ENCODE measurements at regions of chr21 and their contacts with region 1.

Region 1: GRCh38 chr21:35051287-35051818 is 2.3 kb upstream of the RUNX1 start:
- DNase-seq: peak; percentile 94
- H3K4me3 Mint-ChIP-seq: peak overlapping the region; percentile 89
- H3K27ac Mint-ChIP-seq: peak overlapping the region; percentile 94
- H3K4me1 Mint-ChIP-seq: peaks cover 57% of the 10 kb centered on the region
- H3K27me3 Mint-ChIP-seq: peaks cover 4% of the 10 kb centered on the region

Region 2: GRCh38 chr21:34807146-34807880 is 244.0 kb before region 1 on chr21:
- intact Hi-C with region 1: loop called (anchors 2 kb)
- DNase-seq: peak; percentile 84
- H3K4me3 Mint-ChIP-seq: peak overlapping the region; percentile 57
- H3K27ac Mint-ChIP-seq: peak overlapping the region; percentile 94
- H3K4me1 Mint-ChIP-seq: peaks cover 66% of the 10 kb centered on the region
- H3K27me3 Mint-ChIP-seq: no peaks in the 10 kb centered on the region

Region 3: DNA sequence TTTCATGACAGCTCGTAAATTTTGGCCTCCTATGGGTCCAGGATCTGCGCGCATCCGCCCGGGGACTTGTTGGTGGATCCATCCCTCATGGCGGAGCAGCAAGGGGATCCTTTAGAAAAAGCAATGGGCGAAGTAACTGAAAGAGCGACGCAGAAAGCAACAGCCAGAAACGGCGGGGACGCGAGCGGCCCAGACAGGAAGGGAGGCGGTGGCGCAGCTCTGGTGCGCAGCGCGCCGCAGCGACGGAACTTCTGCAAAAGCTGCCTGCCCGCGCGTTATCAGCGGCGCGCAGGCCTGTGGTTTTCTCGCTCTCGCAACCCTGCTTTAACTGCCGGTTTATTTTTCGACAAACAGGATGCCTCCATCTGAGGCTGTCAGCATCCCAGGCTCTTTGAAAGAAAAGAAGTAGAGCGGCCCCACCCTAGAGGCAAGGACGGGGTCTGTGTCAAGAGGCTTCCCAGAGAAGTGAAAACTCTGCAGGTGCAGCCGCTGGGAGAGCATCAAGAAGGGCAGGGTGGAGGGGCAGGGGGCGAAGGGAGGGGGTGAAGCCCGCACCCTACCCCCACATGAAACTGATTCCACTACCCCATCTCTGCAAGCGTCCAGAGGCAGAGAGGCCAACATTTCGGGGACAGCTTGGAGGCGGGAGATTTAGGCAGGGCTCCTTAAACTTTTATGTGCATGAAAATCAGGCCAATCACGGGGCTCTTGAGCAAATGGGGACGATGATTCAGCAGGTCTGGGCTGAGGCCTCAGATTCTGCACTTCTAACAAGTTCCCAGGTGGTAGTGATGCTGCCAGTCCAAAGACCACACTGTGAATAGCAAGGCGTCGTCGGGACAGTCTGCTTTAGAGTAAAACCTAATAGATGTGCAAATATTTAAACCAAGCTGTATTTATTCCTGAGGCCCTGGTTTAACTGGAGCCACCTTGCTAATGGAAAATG is 24.5 kb before region 1 on chr21:
- intact Hi-C with region 1: loop called (anchors 1 kb)
- DNase-seq: peak; percentile 96
- H3K4me3 Mint-ChIP-seq: peak overlapping the region; percentile 81
- H3K27ac Mint-ChIP-seq: peak overlapping the region; percentile 99
- H3K4me1 Mint-ChIP-seq: peaks cover 73% of the 10 kb centered on the region
- H3K27me3 Mint-ChIP-seq: no peaks in the 10 kb centered on the region

Region 4: DNA sequence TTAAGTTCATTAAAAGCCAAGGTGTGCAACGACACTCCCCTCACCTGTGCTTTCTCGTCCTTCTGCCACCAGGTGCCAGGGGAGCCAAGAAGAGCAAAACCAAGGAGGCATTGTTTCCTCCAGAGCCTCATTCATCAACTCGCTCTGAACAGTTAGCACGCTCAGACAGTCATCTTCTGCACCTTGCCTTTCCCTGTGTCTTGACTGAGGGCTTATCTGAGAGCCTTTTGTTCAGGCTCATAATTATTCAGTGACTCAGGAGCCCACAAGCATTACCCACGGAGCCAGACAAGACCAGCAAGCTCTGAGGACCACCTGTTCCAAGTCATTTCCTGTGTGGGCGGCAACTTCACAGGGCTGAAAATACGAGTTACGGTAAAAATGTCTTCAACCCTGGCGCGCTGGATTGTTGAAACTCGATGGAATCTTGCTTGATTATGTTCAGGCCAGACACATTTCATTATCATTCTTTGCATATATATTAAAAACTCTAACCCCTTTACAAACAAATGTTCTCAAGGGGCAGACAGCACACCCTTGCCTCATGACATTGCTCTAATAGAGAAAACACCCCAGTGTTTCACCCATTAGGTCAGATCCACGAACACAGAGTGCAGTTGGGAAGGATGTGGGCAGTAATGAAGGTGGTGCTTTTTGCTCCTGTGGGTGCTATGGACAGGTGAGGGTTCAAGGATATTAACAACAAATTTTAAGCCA is 87.5 kb after region 1 on chr21:
- intact Hi-C with region 1: loop called (anchors 1 kb)
- DNase-seq: peak; percentile 68
- H3K4me3 Mint-ChIP-seq: peak overlapping the region; percentile 74
- H3K27ac Mint-ChIP-seq: peak overlapping the region; percentile 97
- H3K4me1 Mint-ChIP-seq: peaks cover 30% of the 10 kb centered on the region
- H3K27me3 Mint-ChIP-seq: no peaks in the 10 kb centered on the region

Region 5: DNA sequence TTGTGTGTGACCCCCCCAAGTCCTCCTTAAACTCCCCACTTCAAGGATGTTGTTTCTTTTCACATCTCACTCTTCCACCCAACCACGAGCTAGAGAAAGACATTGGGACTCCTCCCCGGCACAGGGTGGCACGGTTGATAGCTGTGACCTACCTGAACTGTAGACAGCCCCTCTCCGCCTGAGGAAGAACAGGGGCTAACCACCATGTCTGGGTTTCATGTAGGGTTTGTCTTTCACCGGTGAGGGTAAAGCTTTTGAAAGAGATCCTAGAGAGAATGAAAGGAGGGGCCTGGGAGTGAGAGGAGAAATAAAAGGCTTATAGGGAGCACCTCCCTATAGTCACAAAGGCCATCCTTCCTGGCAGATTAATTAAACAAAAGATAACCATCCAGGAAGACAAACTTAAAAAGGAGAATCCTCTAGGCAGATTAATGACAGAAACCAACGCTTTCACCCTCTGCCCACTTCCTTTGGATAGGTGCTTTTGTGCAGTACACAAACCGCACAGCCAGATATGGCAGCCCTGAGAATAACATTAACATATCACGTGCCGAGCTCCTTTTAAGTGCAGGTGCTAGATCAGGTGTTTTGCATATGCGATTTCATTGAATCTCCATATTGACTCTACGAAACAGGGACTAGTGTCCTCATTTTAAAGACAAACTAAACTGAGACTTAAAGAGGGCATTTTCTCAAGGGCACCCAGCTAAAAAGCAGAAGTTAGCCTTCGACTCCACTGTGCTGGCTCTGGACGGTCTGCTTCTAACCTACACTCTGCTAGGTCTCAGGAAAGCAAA is 175.8 kb after region 1 on chr21:
- intact Hi-C with region 1: loop called (anchors 1 kb)
- DNase-seq: peak; percentile 85
- H3K4me3 Mint-ChIP-seq: peak overlapping the region; percentile 46
- H3K27ac Mint-ChIP-seq: peak overlapping the region; percentile 70
- H3K4me1 Mint-ChIP-seq: peaks cover 30% of the 10 kb centered on the region
- H3K27me3 Mint-ChIP-seq: no peaks in the 10 kb centered on the region

Region 6: DNA sequence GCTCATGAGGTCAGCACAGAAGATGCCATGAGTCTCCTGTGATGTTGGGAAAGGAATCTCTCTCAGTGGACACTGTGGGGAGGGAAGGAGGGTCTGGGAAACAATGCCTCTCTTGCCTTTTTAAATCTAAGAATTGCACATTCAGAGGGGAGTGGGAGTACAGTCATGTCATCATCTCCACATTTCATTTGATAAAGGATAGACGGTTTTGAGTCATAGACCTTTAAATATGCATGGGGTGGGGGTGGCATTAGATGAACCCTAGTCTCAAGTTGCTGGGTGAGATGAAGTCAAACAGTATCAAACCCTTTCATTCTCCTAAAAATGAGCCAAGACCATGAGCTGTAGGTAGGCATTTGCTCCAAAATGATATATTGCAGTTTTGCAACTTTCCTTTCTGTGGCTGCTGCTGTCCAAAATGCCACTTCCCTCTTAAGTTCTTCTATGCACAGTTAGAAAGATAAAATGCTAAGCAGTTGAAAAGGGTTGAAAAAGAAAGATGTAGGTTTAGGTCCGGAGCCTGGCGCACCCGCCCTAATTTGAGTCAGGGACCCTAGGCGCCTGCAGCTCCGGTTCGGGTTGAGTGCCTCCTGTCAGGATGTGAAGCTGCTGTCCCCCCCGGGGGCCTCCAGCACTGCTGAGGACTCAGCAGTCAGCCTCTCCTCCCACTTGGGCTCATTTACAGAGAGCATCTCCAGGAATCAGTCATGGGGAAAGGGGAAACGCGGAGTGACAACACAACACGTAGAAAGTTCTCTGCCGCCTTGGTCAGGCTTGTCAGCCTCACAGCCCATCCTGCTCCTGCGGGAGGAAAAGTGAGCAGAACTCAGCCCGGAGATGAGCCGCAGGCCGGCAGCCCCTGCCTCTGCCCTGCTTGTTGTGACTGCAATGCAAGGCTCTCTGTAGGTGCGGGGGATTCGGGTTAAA is 477.0 kb after region 1 on chr21:
- intact Hi-C with region 1: loop called (anchors 5 kb)
- DNase-seq: peak; percentile 82
- H3K4me3 Mint-ChIP-seq: peak overlapping the region; percentile 86
- H3K27ac Mint-ChIP-seq: peak overlapping the region; percentile 94
- H3K4me1 Mint-ChIP-seq: peaks cover 49% of the 10 kb centered on the region
- H3K27me3 Mint-ChIP-seq: no peaks in the 10 kb centered on the region

Measured in activated CD4-positive, alpha-beta T cell treated with anti-CD3 and anti-CD28 coated beads, Interleukin-2, amount 10 ng/mL, durations not matched to agents 24 days and 14 days (primary cell).